Astrocyte of the cerebellum (primary cell): ENCODE measurements at regions of chr14 and their contacts with region 1.

Region 1: DNA sequence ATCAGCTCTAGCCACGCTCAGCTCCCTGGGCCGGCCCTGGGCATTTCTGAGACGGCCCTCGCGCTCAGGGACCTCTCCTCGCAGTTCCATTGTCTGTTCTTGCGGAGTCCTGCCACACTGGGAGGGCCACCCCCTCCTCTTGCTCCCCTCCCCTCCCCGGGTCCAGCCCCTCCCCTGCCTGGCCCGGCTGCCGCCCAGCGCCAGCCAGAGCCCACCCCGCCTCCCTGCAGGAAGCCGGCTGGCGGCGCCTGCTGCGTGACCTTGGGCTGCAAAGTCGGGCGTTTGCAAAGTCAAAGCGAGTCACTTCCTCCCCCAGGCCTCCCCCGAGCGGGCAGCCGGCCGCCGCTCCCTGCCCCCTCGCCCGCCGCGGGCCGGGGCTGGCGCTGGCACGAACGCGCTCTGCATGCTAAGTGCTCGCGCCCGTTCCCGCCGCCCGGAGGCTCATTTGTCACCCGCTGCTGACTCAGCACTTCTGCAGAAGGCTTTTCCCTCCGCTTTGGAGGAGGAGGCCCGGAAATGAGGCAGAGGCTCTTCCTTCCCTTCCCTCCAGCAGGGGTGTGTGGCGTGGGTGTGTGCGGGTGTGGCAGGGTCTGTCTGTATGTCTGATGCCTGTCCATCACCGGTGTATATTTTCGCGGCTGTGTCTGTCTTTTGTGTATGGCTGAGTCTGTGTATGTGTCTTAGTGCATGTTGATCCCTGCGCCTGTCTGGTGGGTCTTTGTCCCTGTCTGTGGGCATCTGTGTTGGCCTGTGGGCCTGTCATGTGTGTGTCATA is 72.0 kb downstream of the IRF2BPL start:
- DNase-seq: peak; percentile 41
- H3K4me3 ChIP-seq: no peak overlapping the region
- CTCF ChIP-seq: no peak

Region 2: GRCh38 chr14:76767681-76768656 is 188.5 kb before region 1 on chr14:
- in situ Hi-C with region 1: no loop called
- DNase-seq: no peak
- H3K4me3 ChIP-seq: no peak overlapping the region
- CTCF ChIP-seq: no peak

Region 3: GRCh38 chr14:77040059-77040740 is 83.7 kb after region 1 on chr14:
- in situ Hi-C with region 1: loop called (anchors 10 kb)
- DNase-seq: peak; percentile 95
- H3K4me3 ChIP-seq: peak overlapping the region; percentile 5
- CTCF ChIP-seq: no peak

Region 4: GRCh38 chr14:77059276-77059915 is 102.9 kb after region 1 on chr14:
- in situ Hi-C with region 1: no loop called
- DNase-seq: peak; percentile 89
- H3K4me3 ChIP-seq: no peak overlapping the region
- CTCF ChIP-seq: peak; percentile 45